Caco-2 (cell line): ENCODE measurements at regions of chr5 and their contacts with region 1.

Region 1: DNA sequence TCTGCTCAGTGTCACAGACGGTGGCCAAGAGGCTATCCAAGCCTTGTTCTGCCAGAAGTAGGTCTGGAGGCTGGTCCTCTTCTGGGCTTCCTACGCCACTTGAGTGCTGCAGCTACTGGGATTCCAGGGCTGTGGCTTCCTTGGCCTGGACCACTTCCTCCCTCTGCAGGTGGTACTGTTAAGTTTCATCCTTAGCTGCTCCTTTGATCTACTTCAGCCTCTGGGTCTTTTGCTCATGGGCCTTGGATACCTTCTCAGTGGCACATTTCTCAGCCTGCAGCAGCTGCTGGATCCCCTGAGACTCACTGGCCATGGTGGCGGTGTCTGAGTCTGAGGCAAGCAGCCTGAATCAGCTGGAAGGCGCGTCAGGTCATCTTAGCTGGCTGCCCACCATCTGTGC is 10.3 kb downstream of the CNOT8 start:
- DNase-seq: peak; percentile 66
- H3K4me3 ChIP-seq: no peak overlapping the region
- H3K4me3 Mint-ChIP-seq: no peak overlapping the region
- H3K27ac Mint-ChIP-seq: no peak overlapping the region
- H3K4me1 ChIP-seq: no peaks in the 10 kb centered on the region
- H3K4me1 Mint-ChIP-seq: no peaks in the 10 kb centered on the region
- H3K27me3 ChIP-seq: no peaks in the 10 kb centered on the region
- H3K27me3 Mint-ChIP-seq: no peaks in the 10 kb centered on the region
- CTCF ChIP-seq: peak in 1 of 2 experiments; percentile 62

Region 2: DNA sequence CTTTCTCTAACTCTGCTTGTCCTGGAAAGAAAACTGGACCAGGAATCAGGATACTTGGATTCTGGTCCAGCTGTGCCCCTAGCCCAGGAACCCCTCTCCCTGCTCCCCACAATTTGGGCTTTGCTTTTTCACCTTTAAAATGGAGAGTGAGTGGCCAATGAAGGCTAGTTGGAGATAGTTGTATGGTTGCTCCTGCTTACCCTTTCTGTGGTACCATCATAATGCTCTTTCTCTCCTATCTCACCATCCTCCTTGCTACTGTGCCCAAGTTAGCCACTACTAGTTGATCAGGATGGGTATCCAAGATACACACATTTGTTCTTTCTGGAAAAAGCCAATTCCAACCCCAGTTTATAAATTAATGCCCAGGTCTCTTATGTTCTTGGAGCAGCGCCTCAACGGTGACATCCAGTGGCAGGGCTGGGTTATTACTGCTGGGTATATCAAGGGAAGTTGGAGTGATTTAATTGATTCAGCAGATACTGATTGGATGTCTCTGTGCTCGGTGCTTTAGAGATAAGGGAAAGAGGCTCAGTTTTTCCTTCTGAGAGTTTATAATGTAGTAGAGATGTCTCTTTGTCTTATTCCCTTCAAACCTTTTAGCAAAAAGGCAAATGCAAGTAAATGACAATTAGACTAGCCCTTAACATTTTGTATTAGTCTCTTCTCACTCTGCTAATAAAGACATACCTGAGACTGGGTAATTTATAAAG is 56.9 kb before region 1 on chr5:
- CTCF ChIA-PET with region 1: no interaction called
- POLR2A ChIA-PET with region 1: no interaction called
- intact Hi-C with region 1: loop called (anchors 2 kb)
- DNase-seq: peak; percentile 62 to 66
- H3K4me3 ChIP-seq: no peak overlapping the region
- H3K4me3 Mint-ChIP-seq: no peak overlapping the region
- H3K27ac Mint-ChIP-seq: peak overlapping the region; percentile 36
- H3K4me1 ChIP-seq: peaks cover 9% of the 10 kb centered on the region; the same call in 1 of the 2 replicates
- H3K4me1 Mint-ChIP-seq: peaks cover 10% of the 10 kb centered on the region
- H3K27me3 ChIP-seq: no peaks in the 10 kb centered on the region
- H3K27me3 Mint-ChIP-seq: no peaks in the 10 kb centered on the region
- CTCF ChIP-seq: peak; percentile 89 to 91

Region 3: GRCh38 chr5:155211764-155212163 is 343.1 kb after region 1 on chr5:
- CTCF ChIA-PET with region 1: no interaction called
- POLR2A ChIA-PET with region 1: no interaction called
- intact Hi-C with region 1: no loop called
- DNase-seq: no peak
- H3K4me3 ChIP-seq: no peak overlapping the region
- H3K4me3 Mint-ChIP-seq: no peak overlapping the region
- H3K27ac Mint-ChIP-seq: no peak overlapping the region
- H3K4me1 ChIP-seq: no peaks in the 10 kb centered on the region
- H3K4me1 Mint-ChIP-seq: no peaks in the 10 kb centered on the region
- H3K27me3 ChIP-seq: no peaks in the 10 kb centered on the region
- H3K27me3 Mint-ChIP-seq: peaks cover 11% of the 10 kb centered on the region
- CTCF ChIP-seq: no peak